ENCODE measurements at regions of chr17 and their contacts with region 1.

Region 1: GRCh38 chr17:78360371-78361224 is 721 bp upstream of the SOCS3 start:
- DNase-seq: peak; percentile 96 to 99
- H3K4me3 ChIP-seq: peak overlapping the region; percentile 71
- H3K4me3 Mint-ChIP-seq: peak overlapping the region; percentile 85
- H3K27ac Mint-ChIP-seq: peak overlapping the region; percentile 91
- H3K4me1 ChIP-seq: peaks cover 53% of the 10 kb centered on the region
- H3K4me1 Mint-ChIP-seq: peaks cover 38% of the 10 kb centered on the region
- H3K27me3 ChIP-seq: no peaks in the 10 kb centered on the region
- H3K27me3 Mint-ChIP-seq: no peaks in the 10 kb centered on the region
- CTCF ChIP-seq: peak; percentile 94 to 95

Region 2: GRCh38 chr17:78128551-78129350 is 231.8 kb before region 1 on chr17 and contains the start of gene TMC6:
- CTCF ChIA-PET with region 1: no interaction called
- POLR2A ChIA-PET with region 1: no interaction called
- intact Hi-C with region 1: no loop called
- DNase-seq: peak; percentile 91
- H3K4me3 ChIP-seq: peak within 1 kb of the TSS; percentile 58
- H3K4me3 Mint-ChIP-seq: peak within 1 kb of the TSS; percentile 75
- H3K27ac Mint-ChIP-seq: peak within 1 kb of the TSS; percentile 75
- H3K4me1 ChIP-seq: peaks cover 23% of the 10 kb centered on the region
- H3K4me1 Mint-ChIP-seq: peaks cover 9% of the 10 kb centered on the region
- H3K27me3 ChIP-seq: no peaks in the 10 kb centered on the region
- H3K27me3 Mint-ChIP-seq: no peaks in the 10 kb centered on the region
- CTCF ChIP-seq: no peak
- total RNA-seq, gene TMC6: 77.7 and 84.7 TPM in 2 replicates

Region 3: DNA sequence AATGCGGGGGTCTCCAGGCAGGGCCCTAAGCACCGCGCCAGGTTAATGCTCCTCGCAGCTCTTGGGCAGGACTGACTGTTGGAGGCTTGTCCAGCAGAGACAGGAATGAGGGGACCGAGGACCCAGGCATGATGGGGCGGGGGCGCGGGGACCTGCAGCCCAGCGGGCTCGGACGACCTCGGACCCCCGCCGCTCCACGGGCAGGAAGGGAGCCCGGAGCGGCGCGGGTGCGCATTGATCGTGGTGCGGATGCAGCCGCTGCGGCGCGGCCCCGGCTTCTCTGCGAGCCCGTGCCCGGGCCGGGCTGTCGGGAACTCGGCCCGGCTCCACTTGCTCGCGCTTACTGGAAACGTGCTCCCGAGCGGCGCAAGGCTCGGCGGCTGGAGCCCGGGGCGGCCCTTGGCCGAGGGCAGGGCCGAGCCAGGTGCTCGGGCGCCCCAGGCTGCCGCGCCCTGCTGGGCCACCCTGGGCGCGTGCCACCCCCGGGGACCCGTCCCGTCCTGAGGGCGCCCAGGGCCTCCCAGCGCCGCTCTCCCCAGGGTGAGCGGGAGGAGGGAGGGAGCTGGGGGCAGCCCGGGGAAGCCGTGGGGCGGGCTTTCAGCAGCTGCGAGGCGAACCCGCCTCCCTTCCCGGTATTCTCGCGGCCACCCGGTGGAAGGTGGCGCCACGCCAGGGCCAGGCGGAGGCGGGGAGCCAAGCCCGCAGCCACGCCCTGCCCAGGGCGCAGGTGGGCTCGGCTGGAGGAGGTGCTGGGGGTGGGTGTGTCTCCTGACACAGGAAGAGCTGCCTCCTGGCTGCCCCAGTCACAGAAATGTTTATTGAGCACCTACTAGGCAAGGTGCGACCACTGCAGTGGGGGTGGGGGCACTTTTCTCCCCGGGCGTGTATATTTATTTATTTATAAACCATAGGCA is 46.6 kb before region 1 on chr17:
- CTCF ChIA-PET with region 1: interaction called, 15 read pairs
- POLR2A ChIA-PET with region 1: interaction called, 7 read pairs
- intact Hi-C with region 1: loop called (anchors 2 kb)
- DNase-seq: peak; percentile 95
- H3K4me3 ChIP-seq: peak overlapping the region; percentile 60
- H3K4me3 Mint-ChIP-seq: peak overlapping the region; percentile 82
- H3K27ac Mint-ChIP-seq: peak overlapping the region; percentile 88
- H3K4me1 ChIP-seq: peaks cover 41% of the 10 kb centered on the region
- H3K4me1 Mint-ChIP-seq: peaks cover 36% of the 10 kb centered on the region
- H3K27me3 ChIP-seq: no peaks in the 10 kb centered on the region
- H3K27me3 Mint-ChIP-seq: no peaks in the 10 kb centered on the region
- CTCF ChIP-seq: peak in 1 of 2 experiments; percentile 15

Region 4: GRCh38 chr17:78378225-78379130 is 17.9 kb after region 1 on chr17 and contains the start of gene PGS1:
- CTCF ChIA-PET with region 1: interaction called, 4 read pairs
- POLR2A ChIA-PET with region 1: interaction called, 4 read pairs
- intact Hi-C with region 1: loop called (anchors 1 kb)
- DNase-seq: peak; percentile 75 to 86
- H3K4me3 ChIP-seq: peak within 1 kb of the TSS; percentile 96
- H3K4me3 Mint-ChIP-seq: peak within 1 kb of the TSS; percentile 93
- H3K27ac Mint-ChIP-seq: peak within 1 kb of the TSS; percentile 94
- H3K4me1 ChIP-seq: peaks cover 43% of the 10 kb centered on the region
- H3K4me1 Mint-ChIP-seq: peaks cover 48% of the 10 kb centered on the region
- H3K27me3 ChIP-seq: no peaks in the 10 kb centered on the region
- H3K27me3 Mint-ChIP-seq: no peaks in the 10 kb centered on the region
- CTCF ChIP-seq: no peak
- total RNA-seq, gene PGS1: 54.1 and 55.2 TPM in 2 replicates

Region 5: GRCh38 chr17:78390241-78391050 is 29.8 kb after region 1 on chr17:
- CTCF ChIA-PET with region 1: interaction called, 10 read pairs
- POLR2A ChIA-PET with region 1: interaction called, 3 read pairs
- intact Hi-C with region 1: no loop called
- DNase-seq: peak; percentile 61 to 63
- H3K4me3 ChIP-seq: no peak overlapping the region
- H3K4me3 Mint-ChIP-seq: no peak overlapping the region
- H3K27ac Mint-ChIP-seq: peak overlapping the region; percentile 85
- H3K4me1 ChIP-seq: peaks cover 47% of the 10 kb centered on the region
- H3K4me1 Mint-ChIP-seq: peaks cover 30% of the 10 kb centered on the region
- H3K27me3 ChIP-seq: no peaks in the 10 kb centered on the region
- H3K27me3 Mint-ChIP-seq: no peaks in the 10 kb centered on the region
- CTCF ChIP-seq: peak in 1 of 2 experiments; percentile 37

Measured in Caco-2 (cell line).